ENCODE measurements at regions of chr7 and their contacts with region 1.

Region 1: GRCh38 chr7:36723951-36724664 is at the start of gene AOAH:
- DNase-seq: peak; percentile 88
- ATAC-seq: peak; percentile 79
- H3K4me3 Mint-ChIP-seq: peak within 1 kb of the TSS; percentile 79
- H3K27ac Mint-ChIP-seq: peak within 1 kb of the TSS; percentile 93
- H3K4me1 Mint-ChIP-seq: peaks cover 84% of the 10 kb centered on the region
- H3K27me3 Mint-ChIP-seq: no peaks in the 10 kb centered on the region
- total RNA-seq, gene AOAH: 9.2 to 10.0 TPM

Region 2: GRCh38 chr7:36600869-36601530 is 123.1 kb before region 1 on chr7:
- CTCF ChIA-PET with region 1: no interaction called
- POLR2A ChIA-PET with region 1: no interaction called
- intact Hi-C with region 1: loop called in 1 of 2 experiments (anchors 5 kb)
- DNase-seq: peak; percentile 52
- ATAC-seq: peak; percentile 89
- H3K4me3 Mint-ChIP-seq: no peak overlapping the region
- H3K27ac Mint-ChIP-seq: peak overlapping the region; percentile 35
- H3K4me1 Mint-ChIP-seq: peaks cover 65% of the 10 kb centered on the region
- H3K27me3 Mint-ChIP-seq: no peaks in the 10 kb centered on the region

Region 3: DNA sequence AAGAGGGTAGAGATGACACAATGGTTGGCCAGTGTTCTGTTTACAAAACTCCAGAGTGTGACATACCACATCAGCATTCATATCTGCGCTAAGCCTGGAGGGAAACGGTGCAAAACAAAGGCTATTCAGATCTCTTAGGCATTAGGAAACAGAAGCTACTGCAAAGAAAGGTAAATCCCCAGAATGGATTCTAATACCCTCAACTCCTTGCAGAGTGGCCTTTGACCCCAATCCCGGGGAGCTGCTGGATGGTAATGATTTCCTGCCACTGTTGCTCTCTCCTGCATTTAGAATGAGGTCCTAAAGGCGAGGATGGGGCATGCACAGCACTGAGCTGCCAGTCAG is 65.0 kb before region 1 on chr7:
- CTCF ChIA-PET with region 1: no interaction called
- POLR2A ChIA-PET with region 1: no interaction called
- intact Hi-C with region 1: no loop called
- DNase-seq: no peak
- ATAC-seq: no peak
- H3K4me3 Mint-ChIP-seq: no peak overlapping the region
- H3K27ac Mint-ChIP-seq: no peak overlapping the region
- H3K4me1 Mint-ChIP-seq: peaks cover 23% of the 10 kb centered on the region
- H3K27me3 Mint-ChIP-seq: no peaks in the 10 kb centered on the region

Region 4: DNA sequence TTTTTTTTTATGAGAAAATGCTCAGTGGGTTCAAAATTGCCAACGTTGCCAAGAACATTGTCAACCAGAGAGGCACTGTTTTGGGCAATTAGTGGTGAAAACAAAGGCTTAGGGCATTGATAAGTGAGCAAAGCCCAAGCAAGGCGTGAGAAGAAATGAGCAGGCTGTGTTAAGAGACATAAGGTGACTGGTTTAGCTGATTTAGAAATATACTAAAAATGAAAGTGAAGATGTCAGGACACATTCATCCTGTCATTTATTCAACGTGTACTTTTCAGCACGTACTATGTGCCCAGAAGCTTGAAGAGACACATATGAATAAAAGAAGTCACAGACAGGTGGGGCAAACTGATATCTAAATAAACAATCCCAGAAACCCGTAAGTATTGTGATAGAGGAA is 31.7 kb before region 1 on chr7:
- CTCF ChIA-PET with region 1: no interaction called
- POLR2A ChIA-PET with region 1: interaction called, 5 read pairs
- intact Hi-C with region 1: loop called (anchors 1 to 2 kb)
- DNase-seq: peak; percentile 52
- ATAC-seq: peak; percentile 90
- H3K4me3 Mint-ChIP-seq: peak overlapping the region; percentile 60
- H3K27ac Mint-ChIP-seq: peak overlapping the region; percentile 92
- H3K4me1 Mint-ChIP-seq: peaks cover 55% of the 10 kb centered on the region
- H3K27me3 Mint-ChIP-seq: no peaks in the 10 kb centered on the region

Region 5: GRCh38 chr7:36784991-36785940 is 61.2 kb after region 1 on chr7:
- CTCF ChIA-PET with region 1: no interaction called
- POLR2A ChIA-PET with region 1: no interaction called
- intact Hi-C with region 1: loop called (anchors 2 to 5 kb)
- DNase-seq: peak; percentile 67
- ATAC-seq: peak; percentile 83
- H3K4me3 Mint-ChIP-seq: no peak overlapping the region
- H3K27ac Mint-ChIP-seq: peak overlapping the region; percentile 56
- H3K4me1 Mint-ChIP-seq: peaks cover 78% of the 10 kb centered on the region
- H3K27me3 Mint-ChIP-seq: no peaks in the 10 kb centered on the region

Region 6: DNA sequence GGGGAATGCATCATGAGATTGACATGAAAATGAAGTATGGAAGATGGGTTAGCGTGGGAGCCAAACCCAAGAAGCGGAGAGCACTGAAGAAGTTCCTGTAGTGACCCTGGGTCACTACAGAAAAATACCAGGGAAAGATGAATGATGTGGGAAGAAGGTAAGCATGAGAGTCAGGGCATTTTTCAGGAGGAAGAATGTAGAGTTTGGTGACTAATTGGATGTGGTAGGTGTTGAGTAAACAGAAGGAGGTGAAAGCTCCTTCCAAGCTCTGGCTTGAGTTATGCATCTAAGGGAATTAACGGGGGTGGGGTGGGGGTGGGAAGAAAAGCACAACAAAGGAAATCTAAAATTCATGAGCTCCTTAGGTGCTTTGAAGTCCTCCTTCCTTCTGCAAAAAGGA is 238.3 kb after region 1 on chr7:
- CTCF ChIA-PET with region 1: no interaction called
- POLR2A ChIA-PET with region 1: no interaction called
- intact Hi-C with region 1: loop called in 1 of 2 experiments (anchors 5 kb)
- DNase-seq: no peak
- ATAC-seq: no peak
- H3K4me3 Mint-ChIP-seq: no peak overlapping the region
- H3K27ac Mint-ChIP-seq: no peak overlapping the region
- H3K4me1 Mint-ChIP-seq: peaks cover 55% of the 10 kb centered on the region
- H3K27me3 Mint-ChIP-seq: no peaks in the 10 kb centered on the region

Region 7: GRCh38 chr7:37040330-37040729 is 316.2 kb after region 1 on chr7:
- CTCF ChIA-PET with region 1: no interaction called
- POLR2A ChIA-PET with region 1: no interaction called
- intact Hi-C with region 1: no loop called
- DNase-seq: no peak
- ATAC-seq: no peak
- H3K4me3 Mint-ChIP-seq: no peak overlapping the region
- H3K27ac Mint-ChIP-seq: no peak overlapping the region
- H3K4me1 Mint-ChIP-seq: peaks cover 6% of the 10 kb centered on the region
- H3K27me3 Mint-ChIP-seq: no peaks in the 10 kb centered on the region

Region 8: DNA sequence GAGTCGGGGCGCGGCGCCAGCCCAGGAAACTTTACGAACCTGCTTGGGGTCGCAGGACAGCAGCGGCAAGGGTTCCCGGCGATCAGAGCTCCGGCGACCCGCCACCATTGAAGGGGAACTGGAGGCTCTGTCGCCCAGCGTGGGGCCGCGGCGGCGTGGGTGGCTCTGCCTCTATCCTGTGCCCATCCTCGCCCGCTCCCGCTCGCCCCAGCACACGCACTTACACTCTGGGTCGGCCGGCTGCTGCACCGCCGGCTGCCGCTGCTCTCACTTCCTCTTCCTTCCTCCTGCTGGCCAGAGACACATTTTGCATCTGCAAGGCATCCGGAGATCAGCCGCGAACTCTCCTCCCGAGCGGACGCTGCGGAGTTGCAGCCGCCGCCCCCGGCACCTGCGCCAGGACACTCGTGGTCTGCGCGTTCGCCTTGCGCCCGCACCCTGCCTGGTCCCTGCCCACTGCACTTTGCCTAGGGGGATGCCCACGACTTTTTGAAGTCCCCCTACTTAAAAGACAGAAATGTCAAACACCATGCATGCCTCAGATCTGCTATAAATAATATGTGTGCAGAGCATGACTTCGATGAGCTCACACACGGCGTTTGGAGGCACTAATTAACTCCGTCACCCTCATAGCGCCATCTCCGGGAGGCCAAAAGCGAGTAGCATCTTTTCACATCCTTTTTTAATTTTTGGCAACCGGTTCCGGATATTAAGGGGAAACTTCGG is 724.7 kb after region 1 on chr7 and contains the start of gene ELMO1:
- CTCF ChIA-PET with region 1: no interaction called
- POLR2A ChIA-PET with region 1: no interaction called
- intact Hi-C with region 1: loop called in 1 of 2 experiments (anchors 10 kb)
- DNase-seq: peak; percentile 88
- ATAC-seq: peak; percentile 81
- H3K4me3 Mint-ChIP-seq: peak within 1 kb of the TSS; percentile 81
- H3K27ac Mint-ChIP-seq: peak within 1 kb of the TSS; percentile 98
- H3K4me1 Mint-ChIP-seq: peaks cover 51% of the 10 kb centered on the region
- H3K27me3 Mint-ChIP-seq: no peaks in the 10 kb centered on the region
- total RNA-seq, gene ELMO1: 96.2 to 173 TPM